Activated CD8-positive, alpha-beta T cell treated with anti-CD3 and anti-CD28 coated beads for 36 hours (primary cell): ENCODE measurements at regions of chr5 and their contacts with region 1.

Region 1: GRCh38 chr5:134648425-134649162 is at the start of gene SEC24A:
- DNase-seq: peak; percentile 96
- ATAC-seq: peak; percentile 86
- H3K4me3 Mint-ChIP-seq: peak within 1 kb of the TSS; percentile 87
- H3K27ac Mint-ChIP-seq: peak within 1 kb of the TSS; percentile 98
- H3K4me1 Mint-ChIP-seq: peaks cover 19% of the 10 kb centered on the region
- H3K27me3 Mint-ChIP-seq: no peaks in the 10 kb centered on the region
- CTCF ChIP-seq: no peak
- total RNA-seq, gene SEC24A: 29.3 to 30.5 TPM

Region 2: GRCh38 chr5:134626369-134627014 is 22.1 kb before region 1 on chr5:
- CTCF ChIA-PET with region 1: no interaction called
- POLR2A ChIA-PET with region 1: interaction called, 12 read pairs
- intact Hi-C with region 1: no loop called
- DNase-seq: no peak
- ATAC-seq: no peak
- H3K4me3 Mint-ChIP-seq: no peak overlapping the region
- H3K27ac Mint-ChIP-seq: peak overlapping the region; percentile 4
- H3K4me1 Mint-ChIP-seq: peaks cover 27% of the 10 kb centered on the region
- H3K27me3 Mint-ChIP-seq: no peaks in the 10 kb centered on the region
- CTCF ChIP-seq: no peak

Region 3: GRCh38 chr5:134637161-134637582 is 11.4 kb before region 1 on chr5:
- CTCF ChIA-PET with region 1: interaction called, 7 read pairs
- POLR2A ChIA-PET with region 1: interaction called, 14 read pairs
- intact Hi-C with region 1: loop called (anchors 1 kb)
- DNase-seq: no peak
- ATAC-seq: no peak
- H3K4me3 Mint-ChIP-seq: no peak overlapping the region
- H3K27ac Mint-ChIP-seq: no peak overlapping the region
- H3K4me1 Mint-ChIP-seq: peaks cover 5% of the 10 kb centered on the region
- H3K27me3 Mint-ChIP-seq: no peaks in the 10 kb centered on the region
- CTCF ChIP-seq: no peak